CD8-positive, alpha-beta T cell (primary cell): ENCODE measurements at regions of chr7 and their contacts with region 1.

Region 1: GRCh38 chr7:154927624-154928143 is 75.2 kb downstream of the PAXIP1 start:
- DNase-seq: peak; percentile 53 to 90 (median 80)
- ATAC-seq: peak; percentile 57
- H3K4me3 ChIP-seq: peak overlapping the region; percentile 74 to 78
- H3K4me3 Mint-ChIP-seq: peak overlapping the region; percentile 95
- H3K27ac ChIP-seq: peak overlapping the region; percentile 84 to 92
- H3K27ac Mint-ChIP-seq: peak overlapping the region; percentile 99
- H3K4me1 ChIP-seq: peaks cover 15% of the 10 kb centered on the region
- H3K4me1 Mint-ChIP-seq: peaks cover 35% of the 10 kb centered on the region
- H3K27me3 ChIP-seq: no peaks in the 10 kb centered on the region
- H3K27me3 Mint-ChIP-seq: no peaks in the 10 kb centered on the region
- CTCF ChIP-seq: peak; percentile 79

Region 2: GRCh38 chr7:154947604-154948003 is 19.9 kb after region 1 on chr7:
- CTCF ChIA-PET with region 1: interaction called, 48 read pairs
- POLR2A ChIA-PET with region 1: interaction called, 4 read pairs
- intact Hi-C with region 1: no loop called
- DNase-seq: no peak
- ATAC-seq: no peak
- H3K4me3 ChIP-seq: no peak overlapping the region
- H3K4me3 Mint-ChIP-seq: no peak overlapping the region
- H3K27ac ChIP-seq: no peak overlapping the region
- H3K27ac Mint-ChIP-seq: no peak overlapping the region
- H3K4me1 ChIP-seq: no peaks in the 10 kb centered on the region
- H3K4me1 Mint-ChIP-seq: no peaks in the 10 kb centered on the region
- H3K27me3 ChIP-seq: no peaks in the 10 kb centered on the region
- H3K27me3 Mint-ChIP-seq: no peaks in the 10 kb centered on the region
- CTCF ChIP-seq: no peak

Region 3: DNA sequence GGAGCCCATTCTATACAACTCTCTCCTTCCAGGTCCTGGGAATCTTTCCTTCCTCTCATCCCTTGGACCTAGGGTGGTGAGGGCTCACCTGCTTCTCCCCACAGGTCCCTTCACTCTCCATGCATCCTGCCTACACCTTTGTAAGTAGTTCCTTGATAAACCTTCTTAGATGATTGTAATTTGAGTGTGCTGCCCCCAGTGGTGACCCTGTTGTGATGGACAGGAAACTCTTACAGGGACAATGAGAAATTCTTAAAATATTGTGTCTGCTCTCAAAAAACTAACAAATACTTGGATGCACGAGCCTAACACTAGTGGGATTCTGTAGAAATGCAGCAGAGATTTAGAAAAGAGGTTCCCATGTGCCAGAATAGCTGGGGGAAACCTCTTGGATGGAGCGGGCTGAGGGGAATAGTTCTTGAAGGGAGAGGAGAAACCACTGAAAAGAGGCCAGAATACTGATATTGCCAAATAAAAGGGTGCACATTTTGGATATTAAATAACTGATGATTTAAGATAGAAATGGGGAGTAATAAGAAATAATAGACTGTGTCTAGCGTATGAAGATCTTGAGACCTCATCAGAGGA is 82.0 kb after region 1 on chr7:
- CTCF ChIA-PET with region 1: interaction called, 21 read pairs
- POLR2A ChIA-PET with region 1: no interaction called
- intact Hi-C with region 1: loop called (anchors 1 kb)
- DNase-seq: peak in 5 of 9 experiments; percentile 30 to 49 (median 36)
- ATAC-seq: peak; percentile 61
- H3K4me3 ChIP-seq: no peak overlapping the region
- H3K4me3 Mint-ChIP-seq: no peak overlapping the region
- H3K27ac ChIP-seq: no peak overlapping the region
- H3K27ac Mint-ChIP-seq: no peak overlapping the region
- H3K4me1 ChIP-seq: peaks cover 3% of the 10 kb centered on the region
- H3K4me1 Mint-ChIP-seq: peaks cover 10% of the 10 kb centered on the region
- H3K27me3 ChIP-seq: no peaks in the 10 kb centered on the region
- H3K27me3 Mint-ChIP-seq: no peaks in the 10 kb centered on the region
- CTCF ChIP-seq: peak; percentile 45

Region 4: GRCh38 chr7:155298834-155299534 is 371.3 kb after region 1 on chr7:
- CTCF ChIA-PET with region 1: interaction called, 21 read pairs
- POLR2A ChIA-PET with region 1: interaction called, 11 read pairs
- intact Hi-C with region 1: loop called (anchors 1 kb)
- DNase-seq: peak; percentile 92 to 99 (median 96)
- ATAC-seq: peak; percentile 70
- H3K4me3 ChIP-seq: peak overlapping the region; percentile 57 to 67
- H3K4me3 Mint-ChIP-seq: peak overlapping the region; percentile 90
- H3K27ac ChIP-seq: peak overlapping the region; percentile 79 to 90
- H3K27ac Mint-ChIP-seq: peak overlapping the region; percentile 98
- H3K4me1 ChIP-seq: peaks cover 34% of the 10 kb centered on the region
- H3K4me1 Mint-ChIP-seq: peaks cover 42% of the 10 kb centered on the region
- H3K27me3 ChIP-seq: no peaks in the 10 kb centered on the region
- H3K27me3 Mint-ChIP-seq: no peaks in the 10 kb centered on the region
- CTCF ChIP-seq: no peak

Region 5: GRCh38 chr7:155644178-155644970 is 716.7 kb after region 1 on chr7 and contains the start of gene RBM33:
- CTCF ChIA-PET with region 1: no interaction called
- POLR2A ChIA-PET with region 1: interaction called, 7 read pairs
- intact Hi-C with region 1: loop called (anchors 2 to 5 kb)
- DNase-seq: peak; percentile 59 to 87 (median 78)
- ATAC-seq: peak; percentile 76
- H3K4me3 ChIP-seq: peak within 1 kb of the TSS; percentile 97 to 98
- H3K4me3 Mint-ChIP-seq: peak within 1 kb of the TSS; percentile 98
- H3K27ac ChIP-seq: peak within 1 kb of the TSS; percentile 82 to 92
- H3K27ac Mint-ChIP-seq: peak within 1 kb of the TSS; percentile 99
- H3K4me1 ChIP-seq: peaks cover 31% of the 10 kb centered on the region
- H3K4me1 Mint-ChIP-seq: peaks cover 52% of the 10 kb centered on the region
- H3K27me3 ChIP-seq: no peaks in the 10 kb centered on the region
- H3K27me3 Mint-ChIP-seq: no peaks in the 10 kb centered on the region
- CTCF ChIP-seq: no peak
- total RNA-seq, gene RBM33: 169 to 184 TPM

Region 6: GRCh38 chr7:156473476-156474240 is 1546.0 kb after region 1 on chr7:
- CTCF ChIA-PET with region 1: no interaction called
- POLR2A ChIA-PET with region 1: no interaction called
- intact Hi-C with region 1: loop called in 1 of 2 experiments (anchors 5 kb)
- DNase-seq: peak in 4 of 9 experiments; percentile 13 to 41 (median 22)
- ATAC-seq: no peak
- H3K4me3 ChIP-seq: no peak overlapping the region
- H3K4me3 Mint-ChIP-seq: no peak overlapping the region
- H3K27ac ChIP-seq: no peak overlapping the region
- H3K27ac Mint-ChIP-seq: no peak overlapping the region
- H3K4me1 ChIP-seq: no peaks in the 10 kb centered on the region
- H3K4me1 Mint-ChIP-seq: no peaks in the 10 kb centered on the region
- H3K27me3 ChIP-seq: no peaks in the 10 kb centered on the region
- H3K27me3 Mint-ChIP-seq: peaks cover 27% of the 10 kb centered on the region
- CTCF ChIP-seq: peak; percentile 37